ENCODE measurements at regions of chr6 and their contacts with region 1.

Region 1: GRCh38 chr6:4941782-4942672 is 61.8 kb downstream of the RPP40 start:
- DNase-seq: peak; percentile 73
- ATAC-seq: peak; percentile 93
- H3K4me3 Mint-ChIP-seq: no peak overlapping the region
- H3K27ac Mint-ChIP-seq: peak overlapping the region; percentile 61
- H3K4me1 Mint-ChIP-seq: peaks cover 47% of the 10 kb centered on the region
- H3K27me3 Mint-ChIP-seq: no peaks in the 10 kb centered on the region

Region 2: GRCh38 chr6:3707024-3707423 is 1235.0 kb before region 1 on chr6:
- CTCF ChIA-PET with region 1: no interaction called
- POLR2A ChIA-PET with region 1: no interaction called
- intact Hi-C with region 1: no loop called
- DNase-seq: no peak
- ATAC-seq: no peak
- H3K4me3 Mint-ChIP-seq: no peak overlapping the region
- H3K27ac Mint-ChIP-seq: no peak overlapping the region
- H3K4me1 Mint-ChIP-seq: no peaks in the 10 kb centered on the region
- H3K27me3 Mint-ChIP-seq: peaks cover 21% of the 10 kb centered on the region

Region 3: DNA sequence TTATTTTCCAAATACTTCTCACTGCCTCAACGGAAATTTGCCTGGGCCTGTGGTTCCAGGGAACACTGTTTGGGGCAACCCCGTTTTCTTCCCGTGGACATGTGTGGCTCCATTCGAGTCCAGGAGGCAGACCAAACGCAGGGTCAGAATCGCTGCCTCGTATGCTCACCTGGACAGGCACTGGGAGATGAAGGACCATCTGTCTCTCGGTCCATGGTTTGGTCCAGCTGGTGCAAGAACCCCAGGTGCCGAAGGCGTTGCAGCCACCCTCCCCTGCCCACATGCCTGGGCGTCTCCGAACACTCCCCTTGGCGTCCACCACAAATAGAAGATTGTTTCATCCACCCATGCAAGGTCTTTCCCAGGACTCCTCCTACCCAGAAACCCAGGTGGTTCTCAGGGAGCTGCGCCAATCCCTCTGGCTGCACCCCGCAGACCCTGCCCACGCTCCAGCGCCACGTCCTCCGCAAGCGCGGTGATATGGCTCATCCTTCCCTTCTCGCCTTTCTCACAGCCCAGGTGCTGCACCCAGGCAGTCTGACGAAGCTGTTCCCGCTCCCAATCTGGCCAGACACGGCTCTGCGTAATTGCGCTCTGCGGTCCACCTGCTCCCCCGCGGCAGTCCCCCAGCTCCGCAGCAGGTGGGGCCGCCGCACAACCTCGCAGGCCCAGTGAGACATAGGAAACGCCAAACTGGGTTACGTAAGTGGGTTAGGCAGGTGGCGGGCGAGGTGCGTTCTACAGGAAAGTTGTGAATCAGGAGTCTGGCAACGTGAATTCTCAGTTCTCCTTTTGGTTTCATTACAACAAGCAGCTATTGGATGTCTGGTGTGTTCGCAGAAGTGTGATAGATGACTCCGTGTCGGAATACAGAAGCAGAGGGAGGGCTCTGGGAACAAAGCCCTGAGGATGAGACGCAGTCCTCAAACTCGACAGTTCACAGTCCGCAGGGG is 660.4 kb before region 1 on chr6:
- CTCF ChIA-PET with region 1: no interaction called
- POLR2A ChIA-PET with region 1: no interaction called
- intact Hi-C with region 1: loop called in 1 of 2 experiments (anchors 5 kb)
- DNase-seq: peak; percentile 74
- ATAC-seq: peak; percentile 91
- H3K4me3 Mint-ChIP-seq: peak overlapping the region; percentile 17
- H3K27ac Mint-ChIP-seq: peak overlapping the region; percentile 27
- H3K4me1 Mint-ChIP-seq: peaks cover 7% of the 10 kb centered on the region
- H3K27me3 Mint-ChIP-seq: peaks cover 57% of the 10 kb centered on the region

Region 4: DNA sequence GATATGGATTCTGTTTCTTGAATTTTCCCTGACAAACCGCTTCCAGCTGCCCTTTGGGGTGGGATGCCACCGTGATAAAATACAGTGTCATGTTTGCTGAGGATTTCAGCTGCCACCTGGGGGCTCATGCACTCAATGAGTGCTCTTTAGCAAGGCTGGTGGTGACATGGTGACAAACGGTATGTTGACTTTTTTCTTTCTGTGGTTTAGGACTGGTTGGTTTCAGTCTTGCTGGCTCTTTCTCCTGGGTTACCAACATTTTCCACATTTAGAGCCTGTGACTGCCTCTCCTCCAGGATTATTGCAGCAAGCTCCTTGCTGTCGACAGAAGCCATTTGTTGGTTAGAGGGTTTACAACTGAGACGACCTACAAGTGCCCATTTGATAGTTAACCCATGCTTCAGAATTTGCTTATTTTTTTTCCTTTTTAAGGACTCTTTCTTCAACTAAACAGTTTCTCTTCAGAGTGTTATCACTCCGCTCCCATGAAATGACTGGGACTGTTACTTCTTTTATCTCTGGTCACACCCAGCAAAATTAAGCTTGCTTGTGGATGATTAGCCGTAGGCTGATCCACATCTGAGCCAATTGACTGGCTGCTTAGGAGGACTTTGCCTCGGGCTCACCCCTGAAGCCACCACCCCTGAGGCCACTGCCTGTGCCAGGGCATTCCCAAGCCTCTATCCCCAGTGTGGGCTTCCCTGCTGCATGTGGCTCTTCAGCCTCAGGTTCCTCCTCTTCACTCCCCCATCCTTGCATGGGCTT is 214.2 kb before region 1 on chr6:
- CTCF ChIA-PET with region 1: no interaction called
- POLR2A ChIA-PET with region 1: no interaction called
- intact Hi-C with region 1: loop called (anchors 1 to 2 kb)
- DNase-seq: peak; percentile 42
- ATAC-seq: peak; percentile 86
- H3K4me3 Mint-ChIP-seq: no peak overlapping the region
- H3K27ac Mint-ChIP-seq: no peak overlapping the region
- H3K4me1 Mint-ChIP-seq: peaks cover 12% of the 10 kb centered on the region
- H3K27me3 Mint-ChIP-seq: peaks cover 15% of the 10 kb centered on the region

Region 5: DNA sequence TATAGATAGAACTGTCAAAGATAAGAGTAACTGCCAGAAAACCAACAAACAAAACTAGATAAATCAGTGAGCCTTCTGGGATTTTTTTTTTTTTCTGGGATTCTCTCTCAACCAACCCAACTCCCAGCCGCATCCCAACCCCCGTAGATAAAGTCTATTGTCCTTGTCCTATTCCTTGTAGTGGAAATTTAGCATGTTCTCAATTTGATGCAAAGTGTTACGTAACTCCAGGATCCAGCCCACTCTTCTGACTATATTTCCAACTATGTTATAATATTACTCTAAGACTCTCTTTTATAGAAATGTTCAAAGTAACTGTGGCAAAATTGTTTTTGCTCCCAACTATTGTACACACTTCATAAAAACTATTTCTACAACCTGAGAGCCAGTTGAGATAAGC is 181.3 kb before region 1 on chr6:
- CTCF ChIA-PET with region 1: no interaction called
- POLR2A ChIA-PET with region 1: no interaction called
- intact Hi-C with region 1: no loop called
- DNase-seq: no peak
- ATAC-seq: no peak
- H3K4me3 Mint-ChIP-seq: no peak overlapping the region
- H3K27ac Mint-ChIP-seq: no peak overlapping the region
- H3K4me1 Mint-ChIP-seq: no peaks in the 10 kb centered on the region
- H3K27me3 Mint-ChIP-seq: peaks cover 23% of the 10 kb centered on the region

Measured in activated CD4-positive, alpha-beta T cell treated with anti-CD3 and anti-CD28 coated beads for 36 hours (primary cell).